ENCODE measurements at regions of chr4 and their contacts with region 1.

Region 1: DNA sequence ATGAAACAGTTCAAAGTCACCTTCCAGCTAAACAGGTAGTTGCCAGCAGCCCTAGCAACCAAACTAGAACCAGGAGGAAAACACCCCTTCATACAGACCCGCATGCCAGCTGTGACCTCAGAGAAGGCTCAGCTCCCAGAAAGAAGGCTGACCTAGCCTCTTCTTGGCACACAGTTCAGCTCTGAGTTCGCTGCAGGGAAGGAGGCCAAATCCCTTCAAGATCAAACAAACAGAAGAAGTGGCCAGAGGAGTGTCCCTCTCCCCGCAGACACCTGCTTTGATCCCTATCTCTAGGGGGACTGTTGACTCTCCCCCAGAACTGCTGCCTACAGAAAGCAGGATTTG is 56.0 kb downstream of the HADH start:
- DNase-seq: peak; percentile 62
- ATAC-seq: no peak
- H3K4me3 Mint-ChIP-seq: no peak overlapping the region
- H3K27ac Mint-ChIP-seq: peak overlapping the region; percentile 88
- H3K4me1 Mint-ChIP-seq: peaks cover 66% of the 10 kb centered on the region
- H3K27me3 Mint-ChIP-seq: no peaks in the 10 kb centered on the region

Region 2: DNA sequence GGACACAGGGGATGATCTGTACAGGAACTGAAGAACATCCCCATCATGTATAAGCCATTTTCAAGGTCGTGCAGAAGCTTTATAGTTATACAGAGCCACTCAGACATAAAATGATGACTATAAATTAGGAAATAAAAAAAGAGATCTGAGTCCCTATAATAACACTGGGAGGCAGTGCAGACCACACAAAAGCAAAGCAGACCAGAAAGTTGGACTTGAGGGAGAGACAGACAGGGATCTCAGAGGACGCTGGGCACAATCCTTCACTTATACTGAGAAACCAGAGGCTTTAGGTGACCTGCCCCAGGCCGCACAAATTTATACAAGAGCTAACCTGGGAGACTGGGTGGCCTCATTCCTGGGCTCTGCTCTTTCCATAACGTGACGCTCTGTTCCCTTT is 14.5 kb after region 1 on chr4:
- CTCF ChIA-PET with region 1: interaction called, 13 read pairs
- POLR2A ChIA-PET with region 1: interaction called, 4 read pairs
- intact Hi-C with region 1: no loop called
- DNase-seq: no peak
- ATAC-seq: no peak
- H3K4me3 Mint-ChIP-seq: no peak overlapping the region
- H3K27ac Mint-ChIP-seq: no peak overlapping the region
- H3K4me1 Mint-ChIP-seq: peaks cover 86% of the 10 kb centered on the region
- H3K27me3 Mint-ChIP-seq: no peaks in the 10 kb centered on the region

Region 3: GRCh38 chr4:108141213-108141950 is 95.7 kb after region 1 on chr4:
- CTCF ChIA-PET with region 1: no interaction called
- POLR2A ChIA-PET with region 1: interaction called, 3 read pairs
- intact Hi-C with region 1: loop called in 1 of 2 experiments (anchors 1 kb)
- DNase-seq: peak; percentile 70
- ATAC-seq: peak; percentile 53
- H3K4me3 Mint-ChIP-seq: peak overlapping the region; percentile 75
- H3K27ac Mint-ChIP-seq: peak overlapping the region; percentile 100
- H3K4me1 Mint-ChIP-seq: peaks cover 89% of the 10 kb centered on the region
- H3K27me3 Mint-ChIP-seq: no peaks in the 10 kb centered on the region